Stomach (tissue), 19 donors: ENCODE measurements at regions of chr15 and their contacts with region 1.

Region 1: GRCh38 chr15:42920519-42921227 is at the start of gene TTBK2:
- DNase-seq: peak; percentile 98 to 99
- H3K4me3 ChIP-seq: peak within 1 kb of the TSS; percentile 73 to 100 (median 96)
- H3K27ac ChIP-seq: peak within 1 kb of the TSS; percentile 81 to 95 (median 89)
- H3K4me1 ChIP-seq: peaks cover 8 to 33% (median 20%) of the 10 kb centered on the region in 4 donors
- H3K27me3 ChIP-seq: no peaks in the 10 kb centered on the region
- CTCF ChIP-seq: peak in 2 of 7 experiments; percentile 32 to 39
- EP300 ChIP-seq: no peak
- POLR2A ChIP-seq: peak in 1 of 4 donors; percentile 7
- total RNA-seq, gene TTBK2: 7.0 to 15.6 (median 11.6) TPM

Region 2: GRCh38 chr15:42736793-42737528 is 183.7 kb before region 1 on chr15 and contains the start of gene CDAN1:
- intact Hi-C with region 1: loop called (anchors 10 kb)
- DNase-seq: peak; percentile 94 to 96
- H3K4me3 ChIP-seq: peak within 1 kb of the TSS; percentile 82 to 90 (median 88)
- H3K27ac ChIP-seq: peak within 1 kb of the TSS; percentile 84 to 97 (median 91)
- H3K4me1 ChIP-seq: peaks cover 12 to 33% (median 24%) of the 10 kb centered on the region in 4 donors
- H3K27me3 ChIP-seq: no peaks in the 10 kb centered on the region
- CTCF ChIP-seq: no peak
- EP300 ChIP-seq: no peak
- POLR2A ChIP-seq: no peak
- total RNA-seq, gene CDAN1: 5.8 to 27.2 (median 12.8) TPM

Region 3: GRCh38 chr15:43550527-43551363 is 630.1 kb after region 1 on chr15:
- intact Hi-C with region 1: no loop called
- DNase-seq: no peak
- H3K4me3 ChIP-seq: no peak overlapping the region
- H3K27ac ChIP-seq: no peak overlapping the region
- H3K4me1 ChIP-seq: no peaks in the 10 kb centered on the region
- H3K27me3 ChIP-seq: no peaks in the 10 kb centered on the region
- CTCF ChIP-seq: no peak
- EP300 ChIP-seq: no peak
- POLR2A ChIP-seq: no peak